Adrenal gland (tissue), 19 donors: ENCODE measurements at regions of chr9 and their contacts with region 1.

Region 1: DNA sequence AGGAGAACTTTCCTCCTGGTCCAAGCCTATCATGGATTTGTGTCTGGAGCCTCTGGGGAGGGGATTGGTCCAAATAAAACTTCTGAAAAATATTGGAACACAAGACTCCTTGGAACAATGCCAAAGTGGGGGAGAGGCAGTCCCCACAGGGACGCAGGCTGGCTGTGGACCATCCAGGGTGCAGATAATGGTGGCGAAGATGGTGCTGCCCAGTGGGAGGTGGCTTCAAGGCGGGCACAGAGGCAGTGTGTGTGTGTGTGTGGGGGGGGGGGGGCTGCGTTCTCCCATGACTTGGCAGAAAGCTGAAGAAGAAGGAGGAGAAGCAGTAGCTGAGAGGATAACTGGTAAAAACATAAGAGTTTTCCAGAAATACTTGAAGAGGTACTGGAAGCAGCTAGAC is 186.4 kb downstream of the MELK start:
- DNase-seq: no peak
- H3K4me3 ChIP-seq: no peak overlapping the region
- H3K27ac ChIP-seq: no peak overlapping the region
- H3K4me1 ChIP-seq: no peaks in the 10 kb centered on the region
- H3K27me3 ChIP-seq: peaks cover 6% of the 10 kb centered on the region
- CTCF ChIP-seq: no peak
- POLR2A ChIP-seq: no peak

Region 2: DNA sequence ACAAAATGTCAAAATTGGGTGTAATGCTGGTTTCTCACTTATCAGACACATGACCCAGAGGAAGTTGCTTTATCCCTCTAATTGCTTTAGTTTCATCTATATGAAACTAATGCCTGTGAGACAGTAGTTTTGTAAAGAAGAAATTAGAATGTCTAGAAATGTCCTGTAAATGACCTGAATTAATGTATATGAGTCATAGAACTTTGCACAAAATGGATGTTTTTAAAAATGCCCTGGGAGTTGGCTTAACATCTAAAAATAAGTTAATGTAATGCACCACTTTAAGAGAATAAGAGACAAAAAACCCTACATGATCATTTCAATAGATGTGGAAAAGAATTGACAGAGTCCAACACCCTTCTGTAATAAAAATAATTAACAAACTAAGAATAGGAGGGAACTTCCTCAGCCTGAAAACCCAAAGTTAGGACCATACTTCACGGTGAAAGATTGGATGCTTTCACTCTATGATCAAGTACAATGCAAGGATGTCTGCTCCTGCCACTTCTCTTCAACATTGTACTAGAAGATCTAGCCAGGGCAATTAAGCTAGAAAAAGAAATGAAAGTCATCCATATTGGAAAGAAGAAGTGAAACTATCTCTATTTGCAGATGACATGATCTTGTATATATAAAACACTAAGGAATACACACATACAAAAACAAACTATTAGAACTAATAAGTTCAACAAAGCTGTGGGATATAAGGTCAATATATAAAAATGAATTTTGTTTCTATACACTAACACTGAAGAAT is 68.6 kb before region 1 on chr9:
- intact Hi-C with region 1: loop called in 1 of 2 experiments (anchors 10 kb)
- DNase-seq: no peak
- H3K4me3 ChIP-seq: no peak overlapping the region
- H3K27ac ChIP-seq: no peak overlapping the region
- H3K4me1 ChIP-seq: no peaks in the 10 kb centered on the region
- H3K27me3 ChIP-seq: peaks cover 3% of the 10 kb centered on the region
- CTCF ChIP-seq: no peak
- POLR2A ChIP-seq: no peak

Region 3: DNA sequence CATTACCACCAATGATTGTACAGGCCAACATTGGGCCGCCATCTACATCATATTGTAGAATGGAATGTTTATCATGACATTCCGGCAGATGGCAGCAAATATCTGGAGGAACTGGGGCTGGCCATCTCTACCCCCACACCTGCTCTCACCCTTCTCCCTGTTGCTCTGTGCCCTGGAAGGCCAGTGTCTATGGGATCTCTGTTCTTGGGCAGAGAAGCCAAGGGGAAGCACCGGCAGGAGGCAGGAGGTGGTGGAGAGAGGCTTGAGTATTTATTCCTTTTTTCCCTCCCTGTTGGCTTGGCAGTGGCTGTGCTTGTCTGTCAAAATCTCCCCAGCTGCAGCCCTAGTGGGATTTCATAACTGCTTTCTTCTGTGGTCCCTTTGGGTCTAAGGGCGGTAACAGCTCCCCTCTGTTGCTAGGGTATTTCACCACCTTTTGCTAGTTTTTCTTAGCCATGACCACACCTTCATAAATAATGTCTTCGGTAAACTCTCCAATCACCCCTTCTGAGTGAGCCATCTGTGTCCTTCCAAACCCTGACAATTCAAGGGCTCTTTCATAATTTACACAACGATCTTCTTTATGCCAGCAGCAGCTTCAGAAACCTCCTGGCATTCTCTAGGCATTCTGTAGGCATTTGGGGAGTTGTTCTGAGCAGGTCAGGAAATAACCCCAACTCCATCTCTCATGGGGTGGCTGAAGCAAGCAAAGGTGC is 39.4 kb after region 1 on chr9:
- intact Hi-C with region 1: no loop called
- DNase-seq: peak in 1 of 7 donors; percentile 10
- H3K4me3 ChIP-seq: no peak overlapping the region
- H3K27ac ChIP-seq: no peak overlapping the region
- H3K4me1 ChIP-seq: no peaks in the 10 kb centered on the region
- H3K27me3 ChIP-seq: peaks cover 5% of the 10 kb centered on the region
- CTCF ChIP-seq: no peak
- POLR2A ChIP-seq: no peak